Activated naive CD4-positive, alpha-beta T cell treated with anti-CD3 and anti-CD28 coated beads, Interleukin-2, amount 10 ng/mL, durations not matched to agents 7 days and 5 days (primary cell): ENCODE measurements at regions of chr11 and their contacts with region 1.

Region 1: GRCh38 chr11:119323538-119324033 is 6.7 kb upstream of the MCAM start:
- DNase-seq: peak; percentile 88
- H3K4me3 Mint-ChIP-seq: no peak overlapping the region
- H3K27ac Mint-ChIP-seq: no peak overlapping the region
- H3K4me1 Mint-ChIP-seq: peaks cover 38% of the 10 kb centered on the region
- H3K27me3 Mint-ChIP-seq: peaks cover 35% of the 10 kb centered on the region

Region 2: DNA sequence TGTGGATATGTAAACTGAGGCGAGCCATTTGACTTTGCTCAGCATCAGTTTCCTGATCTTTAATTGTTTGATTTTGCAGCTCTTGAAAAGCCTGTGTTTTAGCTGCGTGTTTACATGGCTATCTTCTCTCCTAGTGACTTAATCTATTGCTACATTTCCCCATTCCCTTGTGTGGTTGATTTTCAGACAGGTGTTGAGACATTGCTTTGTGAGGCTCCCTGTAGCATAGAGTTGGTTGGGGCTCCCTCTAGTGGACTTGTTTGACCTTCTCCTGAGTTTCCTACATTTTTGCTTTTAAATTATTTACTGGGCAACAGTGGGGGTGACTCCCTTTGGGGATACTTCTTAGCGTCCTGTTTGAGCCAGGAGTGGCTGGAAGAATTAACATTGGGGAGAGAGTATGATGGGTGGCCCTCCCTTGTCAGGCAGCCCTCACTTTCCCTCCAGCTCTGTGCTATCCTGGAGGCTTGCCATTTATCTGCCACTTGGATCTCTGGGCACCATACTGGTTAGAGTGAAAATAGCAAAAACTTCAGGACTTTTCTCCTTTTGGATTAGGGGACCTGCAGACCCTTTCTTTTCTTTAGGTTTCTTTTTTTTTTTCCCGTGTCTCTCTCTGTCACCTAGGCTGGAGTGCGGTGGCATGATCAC is 126.6 kb before region 1 on chr11:
- CTCF ChIA-PET with region 1: interaction called, 26 read pairs
- DNase-seq: peak; percentile 82
- H3K4me3 Mint-ChIP-seq: no peak overlapping the region
- H3K27ac Mint-ChIP-seq: no peak overlapping the region
- H3K4me1 Mint-ChIP-seq: peaks cover 10% of the 10 kb centered on the region
- H3K27me3 Mint-ChIP-seq: peaks cover 22% of the 10 kb centered on the region

Region 3: GRCh38 chr11:119262668-119263351 is 60.8 kb before region 1 on chr11:
- CTCF ChIA-PET with region 1: interaction called, 14 read pairs
- DNase-seq: no peak
- H3K4me3 Mint-ChIP-seq: no peak overlapping the region
- H3K27ac Mint-ChIP-seq: no peak overlapping the region
- H3K4me1 Mint-ChIP-seq: peaks cover 53% of the 10 kb centered on the region
- H3K27me3 Mint-ChIP-seq: no peaks in the 10 kb centered on the region

Region 4: DNA sequence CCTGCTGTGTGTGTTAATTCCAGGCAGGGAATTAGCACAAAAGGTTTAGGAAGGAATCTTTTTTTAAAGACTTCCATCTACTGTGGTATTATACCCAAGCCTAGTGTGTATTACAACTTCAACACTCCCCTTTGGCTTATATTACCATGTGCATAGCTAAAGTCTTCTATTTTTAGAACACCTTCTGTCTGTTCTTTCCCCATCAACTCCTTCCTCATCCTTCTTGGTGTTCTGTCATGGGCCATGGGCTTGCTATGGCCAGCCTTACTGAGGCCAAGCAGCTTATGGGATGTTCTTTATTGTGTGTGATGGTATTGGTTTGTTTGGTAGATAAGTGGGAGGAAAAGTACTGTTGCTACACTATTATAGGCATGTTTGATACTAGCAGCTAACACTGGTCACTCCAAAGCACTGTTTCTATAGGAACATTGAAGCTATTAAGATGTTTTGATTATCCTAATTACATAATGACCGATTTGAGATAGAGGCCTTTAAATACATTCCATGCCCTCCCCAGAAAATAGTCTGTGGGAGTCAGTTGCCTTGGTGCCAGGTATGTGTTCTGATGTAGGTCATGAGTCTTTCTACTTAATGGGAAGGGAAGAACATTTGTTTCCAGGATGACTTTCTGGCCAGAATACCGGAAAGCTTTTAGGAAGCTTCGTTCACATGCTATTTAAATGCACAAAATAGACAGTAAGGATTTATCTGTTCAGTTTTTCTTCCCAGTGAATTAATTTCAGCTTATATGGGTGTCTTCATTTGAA is 23.2 kb before region 1 on chr11:
- CTCF ChIA-PET with region 1: interaction called, 83 read pairs
- DNase-seq: no peak
- H3K4me3 Mint-ChIP-seq: no peak overlapping the region
- H3K27ac Mint-ChIP-seq: no peak overlapping the region
- H3K4me1 Mint-ChIP-seq: peaks cover 12% of the 10 kb centered on the region
- H3K27me3 Mint-ChIP-seq: no peaks in the 10 kb centered on the region

Region 5: GRCh38 chr11:119334174-119334930 is 10.8 kb after region 1 on chr11 and contains the start of gene RNF26:
- CTCF ChIA-PET with region 1: interaction called, 106 read pairs
- DNase-seq: peak; percentile 97
- H3K4me3 Mint-ChIP-seq: peak within 1 kb of the TSS; percentile 99
- H3K27ac Mint-ChIP-seq: peak within 1 kb of the TSS; percentile 97
- H3K4me1 Mint-ChIP-seq: peaks cover 62% of the 10 kb centered on the region
- H3K27me3 Mint-ChIP-seq: peaks cover 25% of the 10 kb centered on the region

Region 6: DNA sequence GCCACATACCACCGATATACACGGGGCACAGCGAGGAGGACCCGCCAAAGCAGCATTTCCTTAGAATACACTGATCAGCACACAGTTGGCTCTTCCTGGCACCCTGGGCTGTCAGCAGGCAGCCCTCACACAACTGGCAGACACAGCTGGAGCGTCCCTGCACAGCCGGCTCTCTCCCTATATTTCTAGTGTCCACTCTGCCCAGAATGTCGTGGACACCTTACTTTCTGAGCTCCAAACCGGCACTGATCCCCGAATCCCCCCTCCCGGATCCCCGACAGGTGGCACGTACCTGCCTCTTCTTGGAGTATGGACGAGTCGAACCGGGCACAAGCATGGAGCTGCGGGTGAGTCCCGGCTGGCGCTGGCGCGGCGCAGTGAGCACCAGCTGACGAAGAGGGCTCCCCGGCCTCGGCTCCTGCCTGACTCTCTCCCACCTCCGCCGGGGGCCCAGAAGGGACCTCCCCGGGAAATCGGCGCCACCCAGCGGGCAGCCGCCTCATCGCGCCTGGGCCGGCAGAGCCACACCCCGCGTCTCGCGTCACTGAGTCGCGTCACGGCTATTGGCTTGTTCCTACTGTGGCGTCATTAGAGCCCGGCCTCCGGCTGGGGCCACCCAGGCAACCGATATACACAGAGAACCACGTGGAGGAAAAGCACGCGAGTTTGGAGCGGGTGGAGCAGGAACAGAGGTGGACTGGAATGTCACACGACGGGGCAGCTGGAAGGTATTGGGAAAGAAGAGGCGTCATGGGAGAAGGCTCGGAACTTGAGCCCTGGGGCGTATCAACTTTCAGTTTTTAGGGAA is 57.8 kb after region 1 on chr11 and contains the start of gene USP2:
- CTCF ChIA-PET with region 1: no interaction called
- DNase-seq: peak; percentile 97
- H3K4me3 Mint-ChIP-seq: no peak within 1 kb of the TSS
- H3K27ac Mint-ChIP-seq: no peak within 1 kb of the TSS
- H3K4me1 Mint-ChIP-seq: peaks cover 8% of the 10 kb centered on the region
- H3K27me3 Mint-ChIP-seq: peaks cover 34% of the 10 kb centered on the region